Posterior vena cava (tissue), 2 donors: ENCODE measurements at regions of chr10 and their contacts with region 1.

Region 1: GRCh38 chr10:123472606-123473005 is 193.5 kb upstream of the GPR26 start:
- DNase-seq: no peak

Region 2: GRCh38 chr10:124791378-124792348 is 1319.1 kb after region 1 on chr10 and contains the start of gene EEF1AKMT2:
- intact Hi-C with region 1: loop called in 1 of 2 experiments (anchors 5 kb)
- DNase-seq: peak; percentile 95
- total RNA-seq, gene EEF1AKMT2: 14.8 to 15.3 TPM